ENCODE measurements at regions of chr15 and their contacts with region 1.

Region 1: DNA sequence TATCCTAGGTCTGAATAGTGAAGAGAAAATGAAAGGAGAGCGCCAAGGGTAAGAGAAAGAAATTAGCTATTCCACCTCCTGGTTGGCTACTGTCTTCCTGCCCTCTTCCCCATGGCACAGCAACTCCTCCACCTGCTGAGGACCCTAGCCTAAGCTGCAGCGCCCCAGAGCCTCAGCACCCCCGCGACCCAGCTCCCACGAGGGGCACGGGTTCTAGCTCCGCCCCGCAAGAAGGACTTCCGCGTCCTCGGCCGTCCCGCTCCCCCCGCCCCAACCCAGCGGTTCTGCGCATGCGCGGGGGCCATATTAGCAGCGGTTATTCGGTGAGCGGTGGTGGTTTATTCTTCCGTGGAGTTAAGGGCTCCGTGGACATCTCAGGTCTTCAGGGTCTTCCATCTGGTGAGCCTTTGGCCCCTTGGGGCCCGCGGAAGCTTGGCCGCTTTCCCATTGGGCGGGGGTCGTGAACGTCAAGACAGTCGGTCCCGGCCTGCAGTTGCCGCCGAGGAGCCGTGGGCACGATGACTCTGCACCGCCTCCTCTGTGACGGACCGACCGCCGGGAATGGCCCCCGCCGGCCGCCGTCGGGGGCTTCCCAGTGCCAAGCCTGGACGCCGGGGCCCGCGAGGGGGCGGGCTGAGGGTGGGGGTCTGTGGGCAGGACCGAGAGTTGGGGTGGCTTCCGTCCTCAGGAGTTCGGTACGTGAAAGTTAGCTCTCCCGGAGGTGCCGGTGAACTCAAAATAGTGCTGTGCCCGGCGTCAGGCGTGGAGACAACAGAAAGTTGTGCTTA is at the start of gene PSMA4:
- DNase-seq: peak; percentile 97
- ATAC-seq: peak; percentile 87
- H3K4me3 ChIP-seq: peak within 1 kb of the TSS; percentile 89 to 99 (median 97)
- H3K4me3 Mint-ChIP-seq: peak within 1 kb of the TSS; percentile 98
- H3K27ac ChIP-seq: peak within 1 kb of the TSS; percentile 83 to 88
- H3K27ac Mint-ChIP-seq: peak within 1 kb of the TSS; percentile 100
- H3K4me1 ChIP-seq: peaks cover 12 to 23% of the 10 kb centered on the region in 2 donors
- H3K4me1 Mint-ChIP-seq: peaks cover 27% of the 10 kb centered on the region
- H3K27me3 ChIP-seq: no peaks in the 10 kb centered on the region
- H3K27me3 Mint-ChIP-seq: no peaks in the 10 kb centered on the region
- CTCF ChIP-seq: peak; percentile 38
- total RNA-seq, gene PSMA4: 94.9 and 95.9 TPM in 2 replicates

Region 2: GRCh38 chr15:78077058-78077877 is 463.1 kb before region 1 on chr15 and contains the start of gene TBC1D2B:
- CTCF ChIA-PET with region 1: no interaction called
- POLR2A ChIA-PET with region 1: no interaction called
- intact Hi-C with region 1: loop called (anchors 1 kb)
- DNase-seq: peak; percentile 76
- ATAC-seq: peak; percentile 94
- H3K4me3 ChIP-seq: peak within 1 kb of the TSS; percentile 76 to 89 (median 79)
- H3K4me3 Mint-ChIP-seq: peak within 1 kb of the TSS; percentile 93
- H3K27ac ChIP-seq: peak within 1 kb of the TSS in 1 of 2 donors; percentile 1
- H3K27ac Mint-ChIP-seq: peak within 1 kb of the TSS; percentile 89
- H3K4me1 ChIP-seq: peaks cover 17 to 22% of the 10 kb centered on the region in 2 donors
- H3K4me1 Mint-ChIP-seq: peaks cover 26% of the 10 kb centered on the region
- H3K27me3 ChIP-seq: no peaks in the 10 kb centered on the region
- H3K27me3 Mint-ChIP-seq: no peaks in the 10 kb centered on the region
- CTCF ChIP-seq: peak; percentile 12
- total RNA-seq, gene TBC1D2B: 26.1 and 29.8 TPM in 2 replicates

Region 3: GRCh38 chr15:78299101-78299930 is 241.0 kb before region 1 on chr15 and contains the start of gene SKIC8:
- CTCF ChIA-PET with region 1: no interaction called
- POLR2A ChIA-PET with region 1: no interaction called
- intact Hi-C with region 1: loop called (anchors 1 kb)
- DNase-seq: peak; percentile 94
- ATAC-seq: peak; percentile 98
- H3K4me3 ChIP-seq: peak within 1 kb of the TSS; percentile 64 to 85 (median 75)
- H3K4me3 Mint-ChIP-seq: peak within 1 kb of the TSS; percentile 100
- H3K27ac ChIP-seq: peak within 1 kb of the TSS; percentile 41 to 74
- H3K27ac Mint-ChIP-seq: peak within 1 kb of the TSS; percentile 93
- H3K4me1 ChIP-seq: peaks cover 10 to 11% of the 10 kb centered on the region in 2 donors
- H3K4me1 Mint-ChIP-seq: peaks cover 21% of the 10 kb centered on the region
- H3K27me3 ChIP-seq: peaks cover 0 to 2% (median 0%) of the 10 kb centered on the region in 4 experiments
- H3K27me3 Mint-ChIP-seq: no peaks in the 10 kb centered on the region
- CTCF ChIP-seq: no peak
- total RNA-seq, gene SKIC8: 34.4 and 40.2 TPM in 2 replicates

Region 4: DNA sequence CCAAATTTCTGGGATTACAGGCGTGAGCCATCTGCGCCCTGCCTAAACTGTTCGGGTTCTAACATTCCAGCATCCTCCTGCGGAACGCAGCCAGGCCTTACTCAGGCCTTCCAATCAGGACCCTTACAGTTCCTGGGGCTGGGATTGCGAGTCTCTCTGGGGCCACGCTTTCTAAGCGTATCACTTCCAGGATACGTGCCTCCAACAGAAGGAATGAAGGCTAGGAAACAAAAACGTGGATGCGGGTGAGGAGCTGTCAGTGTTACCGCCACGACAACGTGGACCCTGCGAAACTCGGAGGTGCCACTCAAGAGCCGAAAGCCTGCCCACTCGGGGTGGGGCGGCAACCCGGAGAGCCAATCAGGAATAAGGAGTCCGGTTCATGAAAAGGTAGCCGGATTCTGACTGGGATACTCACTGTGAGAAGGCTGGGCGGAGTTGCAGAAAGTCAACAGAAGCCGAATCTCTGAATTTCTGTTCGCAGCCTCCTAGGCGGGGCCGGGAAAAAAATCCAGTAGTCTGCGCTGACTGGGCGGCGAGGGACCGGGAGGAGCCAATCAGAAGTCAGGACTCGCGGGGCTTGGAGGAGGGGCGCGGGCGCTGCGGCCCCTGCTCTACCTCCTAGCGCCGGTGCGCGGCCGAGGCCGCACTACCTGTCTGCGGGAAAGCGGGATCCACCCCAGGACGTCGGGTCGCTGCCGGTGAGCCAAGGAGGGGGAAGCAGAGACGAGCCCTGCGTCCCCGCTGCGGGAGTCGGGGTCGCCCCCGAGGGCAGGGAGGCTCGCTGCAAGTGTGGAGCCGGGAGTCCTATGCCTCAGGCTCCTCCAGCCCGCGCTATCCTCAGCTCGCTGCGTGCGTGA is 33.1 kb before region 1 on chr15 and contains the start of gene HYKK:
- CTCF ChIA-PET with region 1: no interaction called
- POLR2A ChIA-PET with region 1: no interaction called
- intact Hi-C with region 1: loop called (anchors 1 kb)
- DNase-seq: peak; percentile 63
- ATAC-seq: peak; percentile 80
- H3K4me3 ChIP-seq: peak within 1 kb of the TSS; percentile 60 to 96 (median 70)
- H3K4me3 Mint-ChIP-seq: peak within 1 kb of the TSS; percentile 90
- H3K27ac ChIP-seq: no peak within 1 kb of the TSS
- H3K27ac Mint-ChIP-seq: peak within 1 kb of the TSS; percentile 41
- H3K4me1 ChIP-seq: peaks cover 10 to 14% of the 10 kb centered on the region in 2 donors
- H3K4me1 Mint-ChIP-seq: peaks cover 16% of the 10 kb centered on the region
- H3K27me3 ChIP-seq: peaks cover 0 to 18% (median 6%) of the 10 kb centered on the region in 4 experiments
- H3K27me3 Mint-ChIP-seq: peaks cover 20% of the 10 kb centered on the region
- CTCF ChIP-seq: no peak
- total RNA-seq, gene HYKK: 0.42 and 0.46 TPM in 2 replicates

Region 5: GRCh38 chr15:78565097-78565951 is 25.0 kb after region 1 on chr15 and contains the start of gene CHRNA5:
- CTCF ChIA-PET with region 1: interaction called, 6 read pairs
- POLR2A ChIA-PET with region 1: interaction called, 17 read pairs
- intact Hi-C with region 1: loop called (anchors 1 kb)
- DNase-seq: peak; percentile 81
- ATAC-seq: peak; percentile 95
- H3K4me3 ChIP-seq: peak within 1 kb of the TSS; percentile 54 to 80 (median 68)
- H3K4me3 Mint-ChIP-seq: peak within 1 kb of the TSS; percentile 89
- H3K27ac ChIP-seq: peak within 1 kb of the TSS in 1 of 2 donors; percentile 30
- H3K27ac Mint-ChIP-seq: peak within 1 kb of the TSS; percentile 82
- H3K4me1 ChIP-seq: peaks cover 16 to 17% of the 10 kb centered on the region in 2 donors
- H3K4me1 Mint-ChIP-seq: peaks cover 26% of the 10 kb centered on the region
- H3K27me3 ChIP-seq: peaks cover 0 to 12% (median under 1%) of the 10 kb centered on the region in 4 experiments
- H3K27me3 Mint-ChIP-seq: peaks cover 6% of the 10 kb centered on the region
- CTCF ChIP-seq: no peak
- total RNA-seq, gene CHRNA5: 1.2 and 2.0 TPM in 2 replicates